Endothelial cell of umbilical vein (primary cell): ENCODE measurements at regions of chr2 and their contacts with region 1.

Region 1: GRCh38 chr2:168890006-168890782 is at the start of gene SPC25:
- DNase-seq: peak; percentile 90
- H3K4me3 ChIP-seq: peak within 1 kb of the TSS; percentile 62 to 80 (median 74)
- H3K27ac ChIP-seq: peak within 1 kb of the TSS; percentile 3
- H3K4me1 ChIP-seq: peaks cover 11% of the 10 kb centered on the region
- H3K27me3 ChIP-seq: peaks cover 0 to 8% of the 10 kb centered on the region in 2 experiments
- CTCF ChIP-seq: no peak
- POLR2A ChIP-seq: peak; percentile 31
- total RNA-seq, gene SPC25: 20.5 and 24.2 TPM in 2 replicates

Region 2: DNA sequence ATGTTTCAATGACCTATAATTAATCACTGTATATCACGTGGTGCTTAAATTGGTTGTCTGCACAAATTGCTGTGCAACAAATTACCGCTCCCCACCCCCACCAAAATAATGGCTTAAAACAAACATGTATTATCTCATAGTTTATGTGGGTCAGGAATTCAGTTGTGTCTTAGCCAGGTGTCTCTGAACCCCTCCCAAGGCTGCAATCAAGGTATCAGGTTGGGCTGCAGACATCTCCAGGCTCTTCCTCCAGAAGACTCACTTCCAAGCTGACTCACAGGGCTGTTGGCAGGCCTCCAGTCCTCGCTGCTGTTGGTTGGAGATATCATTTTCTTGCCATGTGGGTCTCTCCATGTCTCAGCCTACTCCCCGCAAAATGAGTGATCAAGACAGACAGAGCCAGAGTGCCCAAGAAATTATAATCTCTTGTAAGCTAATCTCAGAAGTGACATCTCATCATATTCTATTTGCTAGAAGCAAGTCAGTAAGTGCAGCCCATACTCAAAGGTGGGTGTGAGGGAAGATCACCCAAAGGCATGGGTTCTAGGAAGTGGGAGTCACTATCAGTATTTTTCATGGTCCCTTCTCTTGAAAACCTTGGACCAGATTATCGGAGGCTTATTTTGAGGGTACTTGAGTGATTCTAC is 38.4 kb before region 1 on chr2:
- CTCF ChIA-PET with region 1: no interaction called
- POLR2A ChIA-PET with region 1: no interaction called
- dilution Hi-C with region 1: no loop called
- intact Hi-C with region 1: loop called (anchors 1 kb)
- DNase-seq: peak; percentile 91
- H3K4me3 ChIP-seq: no peak overlapping the region
- H3K27ac ChIP-seq: no peak overlapping the region
- H3K4me1 ChIP-seq: peaks cover 2% of the 10 kb centered on the region
- H3K27me3 ChIP-seq: no peaks in the 10 kb centered on the region
- CTCF ChIP-seq: no peak
- POLR2A ChIP-seq: no peak